GM23248 (cell line): ENCODE measurements at regions of chr17 and their contacts with region 1.

Region 1: DNA sequence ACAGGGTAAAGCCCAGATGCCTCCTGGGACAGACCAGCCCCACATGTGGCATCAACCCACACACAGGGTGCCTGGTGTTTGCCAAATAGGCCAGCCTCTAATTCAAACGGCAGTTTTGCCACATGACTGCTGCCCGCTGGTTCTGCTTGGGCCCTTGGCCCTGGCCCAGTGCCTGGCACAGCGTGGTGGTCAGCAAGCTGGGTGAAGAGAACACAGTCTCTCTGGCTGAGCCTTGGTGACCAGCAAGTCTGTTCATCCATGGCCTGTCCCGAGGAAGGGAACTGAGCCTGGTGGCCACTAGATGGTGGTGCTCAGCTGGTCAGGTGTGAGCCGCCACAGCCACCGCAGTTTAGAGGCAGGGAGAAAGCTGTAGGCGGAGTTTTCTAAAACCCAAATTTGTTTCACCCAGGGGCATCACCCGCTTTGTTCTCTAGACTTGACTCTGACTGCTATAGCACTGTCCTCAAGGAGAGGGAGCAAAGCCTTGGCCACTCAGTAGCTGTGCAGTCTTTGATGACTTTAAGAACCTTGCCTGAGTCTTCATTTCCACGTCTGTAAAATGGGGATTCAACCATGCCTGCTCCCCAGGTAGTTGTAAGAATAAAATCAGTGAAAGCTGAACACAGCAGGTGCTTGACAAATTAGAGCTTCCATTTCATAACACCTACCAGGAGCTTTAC is 4.7 kb upstream of the GFAP start:
- DNase-seq: peak; percentile 89
- H3K4me3 ChIP-seq: no peak overlapping the region
- H3K27ac ChIP-seq: no peak overlapping the region
- H3K4me1 ChIP-seq: peaks cover 13% of the 10 kb centered on the region
- H3K27me3 ChIP-seq: no peaks in the 10 kb centered on the region

Region 2: GRCh38 chr17:45018848-45019711 is 99.1 kb after region 1 on chr17:
- in situ Hi-C with region 1: loop called (anchors 10 kb)
- DNase-seq: peak; percentile 87
- H3K4me3 ChIP-seq: peak overlapping the region; percentile 84
- H3K27ac ChIP-seq: no peak overlapping the region
- H3K4me1 ChIP-seq: peaks cover 10% of the 10 kb centered on the region
- H3K27me3 ChIP-seq: no peaks in the 10 kb centered on the region

Region 3: DNA sequence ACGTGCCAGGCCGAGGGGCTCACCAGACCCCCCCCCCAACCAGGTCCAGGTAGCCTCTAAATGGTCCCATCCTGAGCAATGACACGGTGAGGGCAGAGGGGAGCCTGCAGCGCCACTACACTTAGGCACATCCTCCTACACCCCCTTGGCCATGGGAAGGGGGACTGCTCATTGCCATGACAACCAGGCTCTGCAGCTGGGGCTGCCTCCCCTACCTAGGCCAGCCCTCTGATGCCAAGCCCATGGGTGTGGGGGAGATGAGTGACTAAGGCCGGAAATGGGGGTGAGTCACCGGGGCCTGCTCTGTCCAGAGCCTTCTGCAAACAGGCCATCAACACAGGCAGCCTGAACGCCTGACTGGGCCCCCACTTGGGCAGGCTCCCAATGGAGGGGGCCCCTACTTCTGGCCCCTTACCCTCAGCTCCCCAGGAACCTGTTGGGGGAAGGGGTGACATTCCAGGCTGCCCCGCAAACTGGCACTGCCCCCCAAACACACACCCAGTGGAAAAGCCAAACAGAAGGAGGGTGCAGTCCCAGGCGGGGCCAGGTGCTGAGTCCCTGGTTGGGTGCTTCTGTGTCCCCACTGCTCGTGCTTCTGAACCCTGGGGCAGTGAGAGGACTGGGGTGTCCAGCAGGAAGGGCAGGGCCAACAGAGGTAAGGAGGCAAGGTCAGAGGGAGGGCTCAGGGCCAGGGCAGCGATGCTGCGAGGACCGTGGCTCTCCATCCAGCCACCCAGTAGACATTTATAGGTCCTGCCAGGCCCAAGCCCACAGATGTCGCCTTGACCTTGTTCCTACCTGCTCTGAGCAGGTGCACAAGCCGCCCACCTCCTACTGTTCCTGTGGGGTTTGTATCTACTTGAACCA is 204.1 kb after region 1 on chr17:
- in situ Hi-C with region 1: loop called (anchors 5 kb)
- DNase-seq: peak; percentile 94
- H3K4me3 ChIP-seq: no peak overlapping the region
- H3K27ac ChIP-seq: peak overlapping the region; percentile 57
- H3K4me1 ChIP-seq: peaks cover 43% of the 10 kb centered on the region
- H3K27me3 ChIP-seq: no peaks in the 10 kb centered on the region